Left colon (tissue), 2 donors: ENCODE measurements at regions of chr6 and their contacts with region 1.

Region 1: GRCh38 chr6:7615611-7616383 is 25.8 kb downstream of the SNRNP48 start:
- DNase-seq: peak in 1 of 2 donors; percentile 41
- ATAC-seq: peak; percentile 66

Region 2: DNA sequence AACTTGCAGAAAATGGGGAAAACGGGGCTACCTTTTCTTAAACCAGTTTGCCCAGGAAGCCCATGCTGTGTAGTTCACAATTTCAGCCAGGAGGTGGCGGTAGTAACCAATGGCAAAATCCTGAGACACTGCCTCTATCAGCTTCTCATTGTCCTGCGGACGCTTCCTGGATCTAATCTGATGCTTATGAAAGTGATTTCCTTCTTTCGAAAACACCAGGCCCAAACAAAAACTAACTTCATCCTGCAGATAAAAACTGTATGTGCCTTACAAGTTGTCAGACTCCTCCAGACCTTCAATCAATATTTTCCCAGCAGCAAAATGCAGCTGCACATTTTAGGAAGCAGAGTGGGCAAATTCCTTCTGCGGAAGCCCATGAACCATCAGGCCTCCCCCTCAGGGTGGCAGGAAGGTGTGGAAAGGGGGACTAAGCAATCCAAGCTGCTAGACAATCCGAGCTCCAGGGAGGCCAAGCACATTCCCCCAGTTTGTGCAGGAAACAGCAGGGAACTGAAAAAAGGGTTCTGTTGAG is 938.8 kb before region 1 on chr6:
- intact Hi-C with region 1: loop called in 1 of 2 experiments (anchors 10 kb)
- DNase-seq: peak; percentile 69 to 85
- ATAC-seq: peak; percentile 64

Region 3: DNA sequence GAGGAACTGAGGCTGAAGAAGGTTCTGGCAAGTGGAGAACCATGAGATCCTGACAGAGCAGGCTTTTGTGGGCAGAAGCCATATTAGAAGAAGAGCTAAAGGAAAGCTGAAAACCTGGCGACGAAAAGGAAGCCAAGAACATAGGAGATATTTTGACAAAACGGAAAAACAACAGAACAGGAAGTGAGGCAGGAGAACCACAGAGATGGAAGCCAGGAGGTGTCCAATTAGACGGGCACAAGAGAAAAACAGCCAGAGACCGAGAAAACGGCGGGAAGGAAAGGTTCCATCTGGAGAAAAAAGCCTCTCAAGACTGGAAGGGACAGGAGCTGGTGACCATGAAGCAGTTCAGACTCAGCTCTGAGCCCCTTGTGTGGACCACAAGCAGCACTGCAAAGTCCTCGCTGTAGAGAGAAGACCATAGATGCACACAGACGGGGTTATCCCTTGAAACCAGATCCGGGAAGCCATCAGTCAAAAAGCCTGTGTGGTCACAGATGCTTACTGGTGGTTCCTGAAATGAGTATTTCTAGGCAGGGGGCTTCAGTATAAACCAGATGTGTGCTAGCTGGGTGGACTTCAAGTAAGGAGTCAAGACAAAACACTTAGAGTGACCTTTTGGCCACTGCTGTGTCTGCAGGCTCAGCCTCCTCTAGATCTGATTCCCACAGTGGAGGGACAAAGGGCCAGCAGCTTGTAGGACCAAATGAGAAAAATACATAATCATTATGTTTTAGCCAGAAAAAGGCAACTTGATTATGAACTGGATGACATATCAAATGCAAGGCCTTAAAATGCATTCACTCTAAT is 333.5 kb before region 1 on chr6:
- intact Hi-C with region 1: loop called in 1 of 2 experiments (anchors 10 kb)
- DNase-seq: no peak
- ATAC-seq: no peak

Region 4: GRCh38 chr6:7414811-7415210 is 201.0 kb before region 1 on chr6:
- intact Hi-C with region 1: loop called in 1 of 2 experiments (anchors 10 kb)
- DNase-seq: no peak
- ATAC-seq: no peak